PC-3 (cell line): ENCODE measurements at regions of chr1 and their contacts with region 1.

Region 1: GRCh38 chr1:221829327-221830015 is 87.6 kb upstream of the DUSP10 start:
- DNase-seq: peak; percentile 82
- ATAC-seq: peak; percentile 92
- H3K4me3 ChIP-seq: peak overlapping the region; percentile 3; the same call in 1 of the 2 replicates
- H3K27ac ChIP-seq: peak overlapping the region; percentile 57
- H3K4me1 ChIP-seq: peaks cover 36% of the 10 kb centered on the region
- H3K27me3 ChIP-seq: no peaks in the 10 kb centered on the region
- CTCF ChIP-seq: no peak

Region 2: GRCh38 chr1:221816899-221817298 is 12.6 kb before region 1 on chr1:
- CTCF ChIA-PET with region 1: no interaction called
- POLR2A ChIA-PET with region 1: no interaction called
- intact Hi-C with region 1: no loop called
- DNase-seq: peak; percentile 91
- ATAC-seq: peak; percentile 93
- H3K4me3 ChIP-seq: no peak overlapping the region
- H3K27ac ChIP-seq: peak overlapping the region; percentile 66
- H3K4me1 ChIP-seq: peaks cover 24% of the 10 kb centered on the region
- H3K27me3 ChIP-seq: no peaks in the 10 kb centered on the region
- CTCF ChIP-seq: no peak

Region 3: DNA sequence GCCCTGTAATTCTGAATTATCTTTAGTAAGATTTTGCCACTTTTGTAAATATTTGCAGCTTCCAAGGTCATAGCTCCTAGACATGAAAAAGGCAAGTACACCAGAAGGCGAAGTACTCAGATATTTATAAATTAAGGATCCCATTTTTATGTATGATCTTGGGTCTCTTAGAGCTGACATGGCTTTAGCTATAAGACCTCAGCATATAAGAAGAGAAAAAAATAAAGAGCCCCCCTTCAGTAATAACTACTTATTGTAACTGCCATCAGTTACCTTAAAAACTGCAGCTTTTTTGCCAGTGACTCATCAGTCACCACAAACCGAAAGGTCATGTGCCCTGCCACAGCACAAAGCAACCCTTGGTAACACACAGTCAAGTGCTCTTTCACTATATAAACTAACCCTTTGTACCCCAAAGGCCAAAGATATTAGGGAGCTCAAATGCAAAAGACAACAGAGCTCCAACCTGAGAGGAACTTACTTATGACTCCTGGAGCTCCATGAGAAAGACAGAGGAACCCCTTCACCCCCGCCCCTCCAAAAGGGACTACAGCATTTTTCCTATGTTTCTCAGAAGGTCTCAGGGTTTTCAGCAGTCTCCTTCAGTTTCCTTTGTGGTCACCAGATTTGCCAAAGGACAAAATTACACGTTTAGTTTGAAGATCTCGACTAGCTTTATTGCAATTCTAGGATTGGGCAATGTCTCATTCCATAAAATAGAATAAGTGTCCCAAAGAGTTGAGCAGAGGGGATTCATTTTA is 132.2 kb after region 1 on chr1:
- CTCF ChIA-PET with region 1: no interaction called
- POLR2A ChIA-PET with region 1: no interaction called
- intact Hi-C with region 1: loop called (anchors 10 kb)
- DNase-seq: peak; percentile 93
- ATAC-seq: peak; percentile 50
- H3K4me3 ChIP-seq: peak overlapping the region; percentile 27; the same call in 1 of the 2 replicates
- H3K27ac ChIP-seq: peak overlapping the region; percentile 74
- H3K4me1 ChIP-seq: peaks cover 65% of the 10 kb centered on the region
- H3K27me3 ChIP-seq: no peaks in the 10 kb centered on the region
- CTCF ChIP-seq: no peak